ENCODE measurements at regions of chr9 and their contacts with region 1.

Region 1: GRCh38 chr9:4640027-4640426 is 22.1 kb upstream of the PLPP6 start:
- DNase-seq: no peak
- ATAC-seq: no peak

Region 2: DNA sequence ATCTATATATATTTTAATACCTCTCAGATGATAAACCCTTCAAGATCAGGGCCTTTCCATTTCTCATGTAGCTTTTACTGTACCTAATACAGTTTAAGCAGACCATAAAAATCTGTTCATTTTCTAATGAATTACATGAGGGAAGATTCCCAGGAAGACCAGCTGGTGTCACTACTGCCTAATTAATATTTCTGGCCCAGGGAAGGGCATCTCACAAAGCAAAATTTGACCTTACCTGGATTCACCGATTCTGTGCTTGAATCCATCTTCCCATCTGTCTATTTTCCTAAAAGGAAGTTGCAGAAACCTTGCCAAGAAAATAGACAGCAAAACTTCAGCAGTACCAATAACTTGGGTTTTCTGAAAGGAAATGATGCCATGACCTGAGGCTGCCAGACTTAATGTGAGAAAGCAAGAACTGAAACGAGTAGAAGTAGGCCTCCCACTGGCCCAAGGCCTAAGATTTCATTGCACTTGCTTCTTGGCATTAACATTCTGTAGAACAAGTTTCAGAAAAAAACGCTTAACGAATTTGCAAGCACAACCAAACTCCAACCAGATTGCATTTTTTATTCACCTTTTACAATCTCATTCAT is 257.2 kb before region 1 on chr9:
- intact Hi-C with region 1: loop called (anchors 2 kb)
- DNase-seq: no peak
- ATAC-seq: no peak

Region 3: GRCh38 chr9:5122116-5122910 is 482.3 kb after region 1 on chr9:
- intact Hi-C with region 1: no loop called
- DNase-seq: no peak
- ATAC-seq: no peak